PC-9 (cell line): ENCODE measurements at regions of chr9 and their contacts with region 1.

Region 1: DNA sequence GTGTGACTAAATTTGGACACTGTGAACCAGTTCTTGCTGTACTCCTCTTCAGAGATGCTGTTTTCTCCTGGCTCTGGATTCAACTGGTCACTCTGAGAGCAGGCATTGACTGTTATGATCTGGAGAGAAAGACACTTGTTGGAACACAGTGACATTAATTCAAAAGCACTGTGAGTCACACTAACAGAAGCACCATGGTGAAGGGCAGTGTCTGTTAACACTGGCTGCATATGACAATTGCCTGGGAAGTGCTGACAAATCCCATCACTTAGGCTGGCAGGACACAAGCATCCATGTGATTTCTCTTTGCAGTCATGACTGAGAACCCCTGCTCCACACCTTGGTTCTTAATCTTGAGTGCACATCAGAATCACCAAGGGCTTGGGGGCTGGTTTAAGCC is 132.4 kb downstream of the TRPM6 start:
- DNase-seq: no peak
- H3K4me3 ChIP-seq: no peak overlapping the region
- H3K27ac ChIP-seq: no peak overlapping the region
- H3K4me1 ChIP-seq: peaks cover 5% of the 10 kb centered on the region
- H3K27me3 ChIP-seq: no peaks in the 10 kb centered on the region
- CTCF ChIP-seq: no peak

Region 2: DNA sequence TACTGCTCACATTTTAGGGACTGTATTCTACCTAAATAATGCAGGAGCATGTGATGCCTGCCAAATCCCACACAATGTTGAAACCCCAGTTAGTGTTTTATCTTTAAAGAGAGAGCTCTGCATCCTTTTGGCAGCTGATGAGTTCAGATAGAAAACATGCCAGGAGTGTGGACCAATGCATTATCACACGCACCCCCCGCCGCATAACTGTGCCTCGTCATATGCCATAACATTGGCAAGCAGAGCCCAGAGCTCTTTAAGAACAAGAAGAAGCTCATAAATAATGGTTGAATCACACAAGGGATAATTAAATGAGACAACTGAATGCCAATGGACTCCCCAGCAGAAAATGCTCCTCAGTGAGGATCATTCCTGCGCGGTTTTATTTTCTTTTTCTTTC is 311.0 kb before region 1 on chr9:
- CTCF ChIA-PET with region 1: no interaction called
- POLR2A ChIA-PET with region 1: interaction called, 21 read pairs
- intact Hi-C with region 1: no loop called
- DNase-seq: no peak
- H3K4me3 ChIP-seq: no peak overlapping the region
- H3K27ac ChIP-seq: no peak overlapping the region
- H3K4me1 ChIP-seq: no peaks in the 10 kb centered on the region
- H3K27me3 ChIP-seq: no peaks in the 10 kb centered on the region
- CTCF ChIP-seq: no peak

Region 3: DNA sequence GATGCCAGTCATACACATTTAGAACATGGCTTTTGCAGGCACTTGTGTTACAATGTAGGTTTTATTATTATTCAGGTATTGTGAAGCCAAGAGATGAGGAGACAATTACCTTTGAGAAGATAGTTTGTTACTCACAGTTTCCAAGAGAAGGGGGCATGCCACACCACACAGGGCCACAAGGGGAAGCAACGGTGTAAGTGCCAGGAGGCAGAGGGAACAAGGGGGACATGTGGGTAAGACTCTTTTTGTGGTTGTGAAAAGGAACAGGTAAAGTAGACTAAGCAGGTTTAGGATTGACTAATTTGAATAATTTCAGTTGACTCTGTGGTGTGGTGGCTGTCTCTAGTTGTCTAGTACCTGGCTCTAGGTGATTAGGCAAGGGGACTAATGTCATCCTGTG is 58.8 kb before region 1 on chr9:
- CTCF ChIA-PET with region 1: no interaction called
- POLR2A ChIA-PET with region 1: no interaction called
- intact Hi-C with region 1: no loop called
- DNase-seq: no peak
- H3K4me3 ChIP-seq: no peak overlapping the region
- H3K27ac ChIP-seq: no peak overlapping the region
- H3K4me1 ChIP-seq: no peaks in the 10 kb centered on the region
- H3K27me3 ChIP-seq: no peaks in the 10 kb centered on the region
- CTCF ChIP-seq: 0 out of 2 replicates have a peak, but pooled peaks have one; percentile 15

Region 4: DNA sequence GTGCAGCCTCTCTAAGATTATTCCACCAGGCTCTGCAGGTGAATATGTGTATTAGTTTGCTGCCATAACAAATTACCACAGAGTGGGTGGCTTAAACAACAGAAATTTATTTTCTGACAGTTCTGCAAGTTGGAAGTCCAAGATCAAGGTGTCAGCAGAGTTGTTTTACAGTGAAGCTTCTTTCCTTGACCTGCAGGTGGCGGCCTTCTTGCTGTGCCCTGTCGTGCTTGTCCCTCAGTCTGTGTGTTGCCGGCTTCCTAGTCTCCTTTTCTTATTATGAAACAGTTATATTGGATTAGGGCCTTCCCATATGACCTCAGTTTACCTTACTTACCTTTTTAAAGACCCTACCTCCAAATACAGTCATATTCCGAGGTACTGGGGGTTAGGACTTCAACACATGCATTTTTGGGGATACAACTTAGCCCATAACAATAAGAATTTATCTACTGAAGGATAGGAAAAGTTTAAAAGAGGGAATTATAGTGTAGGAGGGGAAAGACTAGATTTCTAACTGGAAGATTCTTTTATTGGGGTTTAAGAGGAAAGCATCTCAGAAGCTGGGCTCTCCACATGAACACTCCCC is 430.3 kb after region 1 on chr9:
- CTCF ChIA-PET with region 1: interaction called, 20 read pairs
- POLR2A ChIA-PET with region 1: no interaction called
- intact Hi-C with region 1: no loop called
- DNase-seq: peak in 1 of 2 experiments; percentile 25
- H3K4me3 ChIP-seq: no peak overlapping the region
- H3K27ac ChIP-seq: no peak overlapping the region
- H3K4me1 ChIP-seq: peaks cover 14% of the 10 kb centered on the region
- H3K27me3 ChIP-seq: no peaks in the 10 kb centered on the region
- CTCF ChIP-seq: peak; percentile 63